ENCODE measurements at regions of chr19 and their contacts with region 1.

Region 1: GRCh38 chr19:17766543-17767131 is 15.4 kb downstream of the FCHO1 start:
- DNase-seq: peak; percentile 51
- ATAC-seq: no peak
- H3K4me3 Mint-ChIP-seq: no peak overlapping the region
- H3K27ac Mint-ChIP-seq: no peak overlapping the region
- H3K4me1 Mint-ChIP-seq: peaks cover 9% of the 10 kb centered on the region
- H3K27me3 Mint-ChIP-seq: no peaks in the 10 kb centered on the region

Region 2: GRCh38 chr19:17655751-17656480 is 110.7 kb before region 1 on chr19:
- CTCF ChIA-PET with region 1: no interaction called
- POLR2A ChIA-PET with region 1: no interaction called
- DNase-seq: no peak
- ATAC-seq: no peak
- H3K4me3 Mint-ChIP-seq: no peak overlapping the region
- H3K27ac Mint-ChIP-seq: no peak overlapping the region
- H3K4me1 Mint-ChIP-seq: no peaks in the 10 kb centered on the region
- H3K27me3 Mint-ChIP-seq: peaks cover 2% of the 10 kb centered on the region

Region 3: DNA sequence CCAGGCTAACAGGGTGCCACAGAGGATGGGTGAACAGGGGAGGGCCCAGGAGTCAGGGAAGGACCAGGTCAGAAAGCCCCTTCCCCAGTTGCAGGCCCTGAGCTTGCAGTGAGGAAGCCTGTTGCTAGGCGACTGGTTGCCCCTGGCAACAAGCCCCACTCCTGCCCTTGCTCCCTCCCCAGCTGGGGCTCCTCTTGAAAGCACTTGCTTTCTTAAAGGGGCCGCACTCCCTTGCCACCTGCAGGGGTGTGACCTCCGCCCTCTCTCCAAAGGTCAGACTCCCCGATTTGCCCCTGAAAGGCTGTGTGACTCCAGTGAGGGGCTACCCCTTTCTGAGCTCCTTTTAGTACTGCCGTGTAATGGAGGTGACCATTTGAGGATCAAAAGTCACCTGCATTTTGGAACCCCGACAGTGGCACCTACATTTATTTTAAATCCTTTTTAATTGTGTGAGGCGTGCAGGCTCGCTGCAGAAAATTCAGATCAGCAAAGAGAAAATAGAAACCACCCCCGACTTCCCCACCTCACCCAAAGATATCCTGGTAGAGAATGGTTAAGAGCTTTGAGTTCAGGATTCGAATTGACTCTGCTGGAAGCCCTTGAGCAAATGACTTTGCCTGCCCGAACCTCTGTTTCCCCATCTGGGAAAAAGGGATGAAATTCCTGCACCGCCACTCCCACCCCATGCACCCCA is 10.5 kb before region 1 on chr19:
- CTCF ChIA-PET with region 1: interaction called, 12 read pairs
- POLR2A ChIA-PET with region 1: no interaction called
- DNase-seq: peak; percentile 59
- ATAC-seq: no peak
- H3K4me3 Mint-ChIP-seq: no peak overlapping the region
- H3K27ac Mint-ChIP-seq: peak overlapping the region; percentile 70
- H3K4me1 Mint-ChIP-seq: peaks cover 39% of the 10 kb centered on the region
- H3K27me3 Mint-ChIP-seq: no peaks in the 10 kb centered on the region

Region 4: DNA sequence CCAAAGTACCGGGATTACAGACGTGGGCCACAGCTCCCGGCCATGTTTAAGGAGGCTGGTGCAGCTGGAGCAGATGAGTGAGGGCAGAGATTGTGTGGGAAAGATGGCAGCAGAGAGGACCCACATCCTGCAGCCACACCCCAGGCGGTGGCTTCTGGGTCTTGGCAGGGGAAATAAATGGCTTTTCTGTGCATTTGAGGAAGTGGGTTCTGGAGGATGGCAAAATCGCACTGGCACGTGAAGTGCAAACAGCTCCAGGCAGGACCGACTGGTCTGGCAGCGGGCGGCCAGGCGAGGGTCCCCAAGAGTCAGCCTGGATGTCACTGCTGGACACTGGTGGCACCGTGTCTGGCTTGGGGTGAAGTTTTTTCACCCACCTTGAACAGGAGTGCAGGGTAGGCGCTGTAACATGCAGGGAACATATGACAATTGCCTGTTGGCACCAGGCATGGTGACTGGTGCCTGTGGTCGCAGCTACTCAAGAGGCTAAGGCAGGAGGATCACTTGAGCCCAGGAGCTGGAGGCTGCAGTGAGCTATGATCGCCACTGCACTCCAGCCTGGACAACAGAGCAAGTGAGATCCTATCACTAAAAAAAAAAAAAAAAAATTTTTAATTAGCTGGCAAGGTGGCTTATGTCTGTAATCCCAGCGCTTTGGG is 36.8 kb after region 1 on chr19:
- CTCF ChIA-PET with region 1: no interaction called
- POLR2A ChIA-PET with region 1: no interaction called
- DNase-seq: peak; percentile 69
- ATAC-seq: peak; percentile 49
- H3K4me3 Mint-ChIP-seq: peak overlapping the region; percentile 51
- H3K27ac Mint-ChIP-seq: peak overlapping the region; percentile 86
- H3K4me1 Mint-ChIP-seq: peaks cover 41% of the 10 kb centered on the region
- H3K27me3 Mint-ChIP-seq: peaks cover 3% of the 10 kb centered on the region

Region 5: GRCh38 chr19:17841810-17842662 is 75.4 kb after region 1 on chr19:
- CTCF ChIA-PET with region 1: no interaction called
- POLR2A ChIA-PET with region 1: no interaction called
- DNase-seq: peak; percentile 61
- ATAC-seq: peak; percentile 49
- H3K4me3 Mint-ChIP-seq: no peak overlapping the region
- H3K27ac Mint-ChIP-seq: no peak overlapping the region
- H3K4me1 Mint-ChIP-seq: peaks cover 42% of the 10 kb centered on the region
- H3K27me3 Mint-ChIP-seq: no peaks in the 10 kb centered on the region